GM12878 (cell line): ENCODE measurements at regions of chr12 and their contacts with region 1.

Region 1: GRCh38 chr12:65685514-65685913 is 138.8 kb upstream of the HMGA2 start:
- DNase-seq: no peak
- ATAC-seq: peak; percentile 51; the same call in 2 of the 3 replicates
- H3K4me3 ChIP-seq: no peak overlapping the region
- H3K27ac ChIP-seq: no peak overlapping the region
- H3K4me1 ChIP-seq: no peaks in the 10 kb centered on the region
- H3K27me3 ChIP-seq: 0 out of 4 replicates have a peak, but pooled peaks cover 0 to 3% of the 10 kb centered on the region in 2 experiments
- CTCF ChIP-seq: peak; percentile 24 to 40 (median 28); a peak in 4 of 6 replicates
- EP300 ChIP-seq: no peak
- POLR2A ChIP-seq: no peak
- RAD21 ChIP-seq: peak; percentile 52; the same call in 1 of the 2 replicates

Region 2: GRCh38 chr12:65546528-65546927 is 139.0 kb before region 1 on chr12:
- CTCF ChIA-PET with region 1: no interaction called
- POLR2A ChIA-PET with region 1: no interaction called
- RAD21 ChIA-PET with region 1: no interaction called
- SMC1A ChIA-PET with region 1: no interaction called
- in situ Hi-C with region 1: no loop called
- intact Hi-C with region 1: no loop called
- DNase-seq: no peak
- ATAC-seq: no peak
- H3K4me3 ChIP-seq: no peak overlapping the region
- H3K27ac ChIP-seq: no peak overlapping the region
- H3K4me1 ChIP-seq: no peaks in the 10 kb centered on the region
- H3K27me3 ChIP-seq: no peaks in the 10 kb centered on the region
- CTCF ChIP-seq: no peak
- EP300 ChIP-seq: no peak
- POLR2A ChIP-seq: no peak
- RAD21 ChIP-seq: no peak

Region 3: DNA sequence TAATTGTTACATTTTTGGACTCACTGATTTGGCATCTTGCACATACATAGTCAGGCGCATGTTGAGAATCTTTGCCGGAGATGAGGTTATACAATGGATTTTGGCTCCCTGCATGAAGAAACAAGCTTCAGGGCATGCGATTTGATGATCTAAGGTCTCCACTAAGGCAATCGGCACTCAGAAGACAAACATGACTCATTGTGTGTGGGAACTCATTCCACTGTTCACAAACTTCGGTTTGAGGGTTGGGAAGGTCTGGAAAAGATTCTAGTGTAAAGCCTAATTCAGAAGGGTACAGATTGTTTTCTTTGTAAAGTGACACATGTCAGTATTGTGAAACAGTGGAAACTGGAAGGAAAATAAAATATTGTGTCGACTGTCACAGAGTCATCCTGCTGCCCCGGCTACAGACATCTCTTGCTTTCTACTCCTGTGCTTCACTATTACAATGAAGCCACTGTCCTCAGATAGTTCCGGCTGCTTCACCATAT is 53.8 kb before region 1 on chr12:
- CTCF ChIA-PET with region 1: no interaction called
- POLR2A ChIA-PET with region 1: no interaction called
- RAD21 ChIA-PET with region 1: no interaction called
- SMC1A ChIA-PET with region 1: no interaction called
- in situ Hi-C with region 1: no loop called
- intact Hi-C with region 1: no loop called
- DNase-seq: no peak
- ATAC-seq: no peak
- H3K4me3 ChIP-seq: no peak overlapping the region
- H3K27ac ChIP-seq: no peak overlapping the region
- H3K4me1 ChIP-seq: no peaks in the 10 kb centered on the region
- H3K27me3 ChIP-seq: no peaks in the 10 kb centered on the region
- CTCF ChIP-seq: no peak
- EP300 ChIP-seq: no peak
- POLR2A ChIP-seq: no peak
- RAD21 ChIP-seq: no peak

Region 4: DNA sequence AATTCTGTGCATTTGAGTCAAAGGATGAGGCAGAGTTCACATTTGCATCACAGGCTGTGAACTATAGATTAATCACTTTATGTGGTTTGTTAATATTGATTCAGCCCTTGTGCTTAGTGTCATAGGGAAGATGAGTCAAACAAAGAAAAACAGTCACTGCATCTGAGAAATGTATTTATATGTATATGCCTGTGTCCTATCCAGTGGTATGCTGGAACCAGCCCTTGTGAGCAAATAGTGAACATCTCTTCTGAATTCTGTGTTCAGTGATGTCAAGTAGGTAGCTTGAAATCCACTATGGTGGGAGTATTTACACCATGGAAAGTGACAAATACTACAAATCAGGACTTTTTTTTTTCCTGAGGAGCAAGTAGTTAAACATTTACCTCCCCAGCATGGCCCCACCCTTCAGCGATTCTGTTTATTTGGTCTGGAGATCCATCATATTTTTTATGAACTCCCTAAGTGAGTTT is 267.3 kb after region 1 on chr12:
- CTCF ChIA-PET with region 1: no interaction called
- POLR2A ChIA-PET with region 1: no interaction called
- RAD21 ChIA-PET with region 1: no interaction called
- SMC1A ChIA-PET with region 1: no interaction called
- in situ Hi-C with region 1: no loop called
- intact Hi-C with region 1: loop called (anchors 10 kb)
- DNase-seq: no peak
- ATAC-seq: peak; percentile 72
- H3K4me3 ChIP-seq: no peak overlapping the region
- H3K27ac ChIP-seq: no peak overlapping the region
- H3K4me1 ChIP-seq: peaks cover 4% of the 10 kb centered on the region
- H3K27me3 ChIP-seq: no peaks in the 10 kb centered on the region
- CTCF ChIP-seq: no peak
- EP300 ChIP-seq: no peak
- POLR2A ChIP-seq: no peak
- RAD21 ChIP-seq: no peak